Naive thymus-derived CD4-positive, alpha-beta T cell (primary cell): ENCODE measurements at regions of chr7 and their contacts with region 1.

Region 1: DNA sequence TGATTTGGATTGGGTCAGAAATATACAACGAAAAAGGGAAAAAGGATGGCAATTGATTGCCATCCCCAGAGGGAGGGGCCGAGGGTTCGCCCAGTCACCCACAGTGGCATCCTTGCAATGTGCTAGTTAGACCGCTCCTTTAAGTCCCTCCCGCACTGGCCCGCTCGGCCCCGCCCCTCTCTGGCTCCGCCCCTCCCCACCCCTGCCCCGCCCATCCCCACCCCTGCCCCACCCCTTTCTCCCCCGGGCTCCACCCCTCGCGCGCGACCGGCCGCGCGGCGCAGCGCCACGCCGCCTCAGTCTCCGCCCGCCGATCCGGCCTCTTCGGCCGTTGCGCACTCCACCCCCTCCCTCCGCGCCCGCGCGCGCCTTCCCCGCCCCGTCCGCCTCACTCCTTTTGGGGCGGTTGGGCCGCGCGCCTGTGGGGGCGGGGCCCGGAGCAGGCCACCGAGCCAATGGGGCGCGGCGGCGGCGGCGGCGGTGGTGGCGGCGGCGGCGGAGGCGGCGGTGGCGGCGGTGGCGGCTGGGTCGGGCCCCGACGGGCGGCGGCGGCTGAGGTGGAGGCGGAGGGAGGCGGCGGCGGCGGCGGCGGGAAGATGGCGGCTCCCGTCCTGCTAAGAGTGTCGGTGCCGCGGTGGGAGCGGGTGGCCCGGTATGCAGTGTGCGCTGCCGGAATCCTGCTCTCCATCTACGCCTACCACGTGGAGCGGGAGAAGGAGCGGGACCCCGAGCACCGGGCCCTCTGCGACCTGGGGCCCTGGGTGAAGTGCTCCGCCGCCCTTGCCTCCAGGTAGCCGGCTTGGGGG is at the start of gene VKORC1L1:
- DNase-seq: peak; percentile 87 to 97 (median 93)
- ATAC-seq: peak; percentile 94
- H3K4me3 ChIP-seq: peak within 1 kb of the TSS; percentile 47
- H3K4me3 Mint-ChIP-seq: peak within 1 kb of the TSS; percentile 81 to 92 (median 86)
- H3K27ac ChIP-seq: peak within 1 kb of the TSS; percentile 67
- H3K27ac Mint-ChIP-seq: peak within 1 kb of the TSS; percentile 43 to 90 (median 82)
- H3K4me1 ChIP-seq: no peaks in the 10 kb centered on the region
- H3K4me1 Mint-ChIP-seq: peaks cover 0 to 11% (median 6%) of the 10 kb centered on the region in 7 donors
- H3K27me3 ChIP-seq: no peaks in the 10 kb centered on the region
- H3K27me3 Mint-ChIP-seq: no peaks in the 10 kb centered on the region
- total RNA-seq, gene VKORC1L1: 3.4 to 15.8 (median 9.4) TPM

Region 2: DNA sequence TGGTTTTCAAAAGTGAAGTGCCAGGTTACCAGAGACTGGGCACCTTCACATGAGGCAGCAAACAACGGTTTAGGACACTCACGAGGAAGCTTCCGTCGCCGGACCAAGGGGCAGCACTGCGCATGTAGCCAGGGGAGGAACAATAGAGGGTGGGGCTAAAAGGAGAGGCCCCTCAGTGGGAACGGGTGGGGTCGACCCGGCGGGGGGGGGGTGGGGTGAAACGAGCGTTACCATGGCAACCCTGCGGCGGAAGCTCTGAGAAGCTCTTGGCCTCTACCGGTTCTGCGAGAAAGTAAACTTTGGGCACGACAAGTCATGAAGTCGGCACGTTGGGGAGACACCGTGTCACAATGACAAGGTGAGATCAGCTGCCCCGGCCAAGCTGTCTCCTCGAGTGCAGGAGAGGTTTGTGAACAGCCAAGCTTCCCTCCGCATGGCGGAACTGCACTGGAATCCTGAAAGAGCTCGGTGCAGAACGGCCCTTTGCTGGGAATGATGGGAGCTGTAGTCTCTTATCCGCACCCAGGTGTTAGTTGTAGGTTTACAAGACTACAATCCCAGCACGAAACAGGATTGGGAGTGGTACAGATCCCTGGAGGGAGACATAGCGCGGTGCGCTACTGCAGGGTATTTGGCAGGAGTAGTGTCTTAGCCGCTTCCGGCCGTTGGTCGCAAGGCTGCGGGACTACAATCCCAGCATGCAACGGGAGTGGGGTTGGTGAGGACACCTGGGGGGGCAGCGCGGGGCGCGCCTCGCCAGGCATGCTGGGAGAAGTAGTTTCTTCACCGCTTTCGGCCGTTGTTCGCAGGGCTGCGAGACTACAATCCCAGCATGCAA is 1947.1 kb before region 1 on chr7:
- CTCF ChIA-PET with region 1: no interaction called
- POLR2A ChIA-PET with region 1: no interaction called
- intact Hi-C with region 1: loop called in 1 of 2 experiments (anchors 2 kb)
- DNase-seq: peak; percentile 69 to 98 (median 95)
- ATAC-seq: peak; percentile 98
- H3K4me3 ChIP-seq: peak overlapping the region; percentile 64
- H3K4me3 Mint-ChIP-seq: peak overlapping the region; percentile 88 to 100 (median 98)
- H3K27ac ChIP-seq: peak overlapping the region; percentile 82
- H3K27ac Mint-ChIP-seq: peak overlapping the region; percentile 87 to 98 (median 95)
- H3K4me1 ChIP-seq: no peaks in the 10 kb centered on the region
- H3K4me1 Mint-ChIP-seq: peaks cover 0 to 24% (median 12%) of the 10 kb centered on the region in 7 donors
- H3K27me3 ChIP-seq: no peaks in the 10 kb centered on the region
- H3K27me3 Mint-ChIP-seq: peaks cover 0 to 4% (median 0%) of the 10 kb centered on the region in 5 donors

Region 3: DNA sequence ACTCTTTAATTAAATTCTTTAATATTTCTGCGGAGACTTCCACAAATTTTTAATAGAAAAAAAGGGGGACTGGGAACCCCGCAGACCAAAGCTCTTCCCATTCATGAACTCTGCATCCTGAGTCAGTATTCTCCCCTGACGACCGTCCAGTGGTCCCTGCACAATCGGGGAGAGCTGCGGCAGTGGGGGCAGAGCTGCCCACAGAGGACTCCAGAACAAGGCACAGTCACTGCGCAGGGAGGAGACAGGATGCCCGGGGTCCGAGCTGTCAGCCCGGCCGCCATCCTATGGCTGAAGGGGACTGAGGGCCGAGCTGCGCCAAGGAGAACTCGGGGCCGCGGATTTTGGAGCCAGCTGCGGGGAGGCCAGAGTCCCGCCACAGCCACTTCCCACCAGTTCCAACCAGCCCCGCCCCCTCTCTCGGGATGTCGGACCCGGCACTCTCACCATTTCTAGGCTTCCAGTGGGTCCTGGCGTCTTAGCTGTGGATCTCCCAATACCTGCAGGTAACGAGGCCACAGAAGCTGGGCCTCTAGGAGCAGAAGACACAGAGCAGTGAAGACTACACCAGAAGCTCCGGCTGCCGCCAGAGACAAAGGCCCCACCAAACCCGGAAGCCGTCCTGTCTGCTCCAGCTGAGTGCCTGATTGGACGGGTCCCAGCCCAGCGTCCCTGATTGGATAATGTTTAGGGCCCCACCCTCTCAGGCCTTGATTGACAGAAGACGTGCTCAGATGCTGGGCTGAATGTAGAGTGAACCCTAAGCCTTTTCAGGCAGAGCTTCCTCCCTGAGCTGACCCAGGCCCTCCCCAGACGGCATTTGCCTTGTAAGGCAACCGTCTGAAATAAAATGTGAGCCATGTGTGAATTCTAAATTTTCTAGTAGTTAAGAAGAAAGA is 866.6 kb before region 1 on chr7 and contains the start of gene ERV3-1:
- CTCF ChIA-PET with region 1: no interaction called
- POLR2A ChIA-PET with region 1: no interaction called
- intact Hi-C with region 1: loop called in 1 of 2 experiments (anchors 1 kb)
- DNase-seq: peak; percentile 76 to 96 (median 93)
- ATAC-seq: peak; percentile 99
- H3K4me3 ChIP-seq: peak within 1 kb of the TSS; percentile 72
- H3K4me3 Mint-ChIP-seq: peak within 1 kb of the TSS; percentile 75 to 96 (median 94)
- H3K27ac ChIP-seq: peak within 1 kb of the TSS; percentile 81
- H3K27ac Mint-ChIP-seq: peak within 1 kb of the TSS; percentile 73 to 98 (median 94)
- H3K4me1 ChIP-seq: peaks cover 4 to 21% of the 10 kb centered on the region in 2 donors
- H3K4me1 Mint-ChIP-seq: peaks cover 26 to 57% (median 45%) of the 10 kb centered on the region in 7 donors
- H3K27me3 ChIP-seq: no peaks in the 10 kb centered on the region
- H3K27me3 Mint-ChIP-seq: no peaks in the 10 kb centered on the region
- total RNA-seq, gene ERV3-1: 12.2 to 22.9 (median 14.9) TPM

Region 4: GRCh38 chr7:65750511-65751344 is 122.3 kb before region 1 on chr7:
- CTCF ChIA-PET with region 1: no interaction called
- POLR2A ChIA-PET with region 1: no interaction called
- intact Hi-C with region 1: loop called (anchors 1 kb)
- DNase-seq: peak; percentile 76 to 91 (median 80)
- ATAC-seq: peak; percentile 99
- H3K4me3 ChIP-seq: peak overlapping the region; percentile 97
- H3K4me3 Mint-ChIP-seq: peak overlapping the region; percentile 90 to 100 (median 98)
- H3K27ac ChIP-seq: peak overlapping the region; percentile 85
- H3K27ac Mint-ChIP-seq: peak overlapping the region; percentile 75 to 95 (median 87)
- H3K4me1 ChIP-seq: peaks cover 6 to 7% of the 10 kb centered on the region in 2 donors
- H3K4me1 Mint-ChIP-seq: peaks cover 0 to 35% (median 20%) of the 10 kb centered on the region in 7 donors
- H3K27me3 ChIP-seq: no peaks in the 10 kb centered on the region
- H3K27me3 Mint-ChIP-seq: no peaks in the 10 kb centered on the region

Region 5: DNA sequence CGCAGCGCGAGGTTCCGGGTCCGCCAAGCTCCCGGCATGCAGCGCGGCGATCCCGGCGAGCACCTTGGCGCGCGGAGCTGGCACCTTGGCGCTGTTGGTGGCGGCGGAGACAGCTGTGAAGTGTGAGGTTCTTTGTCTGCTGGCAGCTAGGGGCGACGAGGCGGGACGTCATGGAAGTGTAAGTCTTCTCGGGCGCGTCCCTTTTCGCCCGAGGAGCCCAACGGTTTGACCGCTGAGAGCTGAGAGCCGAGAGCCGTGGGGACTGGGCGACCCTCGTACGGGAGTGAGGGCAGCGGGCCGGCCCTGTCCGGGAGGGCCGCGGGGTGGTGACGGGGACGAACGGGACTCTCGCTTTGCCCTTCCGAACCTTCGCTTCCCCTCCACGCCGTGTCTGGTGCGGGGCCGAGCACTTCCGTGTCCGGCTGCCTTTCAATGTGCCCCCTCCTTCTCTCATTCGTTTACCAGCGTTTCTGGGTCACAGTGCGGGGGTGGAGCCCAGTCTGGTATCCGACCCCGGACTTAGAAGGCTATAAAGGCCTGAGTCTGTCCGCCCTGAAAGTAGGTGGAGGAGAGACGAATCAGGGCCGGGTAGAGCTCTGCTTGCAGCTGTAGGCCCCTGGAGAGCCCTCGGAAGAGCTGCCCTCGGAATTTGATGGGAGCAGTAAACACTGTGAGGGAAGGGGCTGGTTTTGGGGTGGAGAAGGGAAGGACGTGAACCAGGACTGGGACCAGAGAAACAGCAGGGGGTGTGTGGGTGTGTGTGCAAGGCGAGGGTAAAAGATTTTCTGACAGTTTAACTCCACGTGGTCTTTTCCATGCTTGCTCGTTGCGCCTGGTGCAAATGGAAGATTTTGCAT is 242.0 kb after region 1 on chr7 and contains the start of gene CRCP:
- CTCF ChIA-PET with region 1: no interaction called
- POLR2A ChIA-PET with region 1: no interaction called
- intact Hi-C with region 1: loop called in 1 of 2 experiments (anchors 2 kb)
- DNase-seq: peak; percentile 78 to 87 (median 83)
- ATAC-seq: peak; percentile 94
- H3K4me3 ChIP-seq: peak within 1 kb of the TSS; percentile 87
- H3K4me3 Mint-ChIP-seq: peak within 1 kb of the TSS; percentile 94 to 98 (median 96)
- H3K27ac ChIP-seq: peak within 1 kb of the TSS; percentile 95
- H3K27ac Mint-ChIP-seq: peak within 1 kb of the TSS; percentile 94 to 98 (median 96)
- H3K4me1 ChIP-seq: peaks cover 14 to 26% of the 10 kb centered on the region in 2 donors
- H3K4me1 Mint-ChIP-seq: peaks cover 28 to 56% (median 47%) of the 10 kb centered on the region in 7 donors
- H3K27me3 ChIP-seq: no peaks in the 10 kb centered on the region
- H3K27me3 Mint-ChIP-seq: no peaks in the 10 kb centered on the region
- total RNA-seq, gene CRCP: 29.8 to 37.9 (median 34.0) TPM

Region 6: GRCh38 chr7:66740302-66740979 is 867.5 kb after region 1 on chr7 and contains the start of gene RABGEF1:
- CTCF ChIA-PET with region 1: no interaction called
- POLR2A ChIA-PET with region 1: no interaction called
- intact Hi-C with region 1: loop called in 1 of 2 experiments (anchors 10 kb)
- DNase-seq: peak; percentile 94 to 98 (median 95)
- ATAC-seq: peak; percentile 95
- H3K4me3 ChIP-seq: peak within 1 kb of the TSS; percentile 82
- H3K4me3 Mint-ChIP-seq: peak within 1 kb of the TSS; percentile 89 to 98 (median 94)
- H3K27ac ChIP-seq: peak within 1 kb of the TSS; percentile 84
- H3K27ac Mint-ChIP-seq: peak within 1 kb of the TSS; percentile 94 to 98 (median 96)
- H3K4me1 ChIP-seq: peaks cover 0 to 6% of the 10 kb centered on the region in 2 donors
- H3K4me1 Mint-ChIP-seq: peaks cover 30 to 74% (median 54%) of the 10 kb centered on the region in 7 donors
- H3K27me3 ChIP-seq: no peaks in the 10 kb centered on the region
- H3K27me3 Mint-ChIP-seq: no peaks in the 10 kb centered on the region
- total RNA-seq, gene RABGEF1: 20.7 to 35.7 (median 22.2) TPM